ENCODE measurements at regions of chr5 and their contacts with region 1.

Region 1: GRCh38 chr5:40736103-40736875 is 19.5 kb downstream of the TTC33 start:
- DNase-seq: peak in 1 of 2 experiments; percentile 56
- H3K4me3 ChIP-seq: no peak overlapping the region
- H3K27ac ChIP-seq: no peak overlapping the region
- H3K4me1 ChIP-seq: 0 out of 2 replicates have a peak, but pooled peaks cover 8% of the 10 kb centered on the region
- H3K27me3 ChIP-seq: no peaks in the 10 kb centered on the region
- CTCF ChIP-seq: peak; percentile 91

Region 2: DNA sequence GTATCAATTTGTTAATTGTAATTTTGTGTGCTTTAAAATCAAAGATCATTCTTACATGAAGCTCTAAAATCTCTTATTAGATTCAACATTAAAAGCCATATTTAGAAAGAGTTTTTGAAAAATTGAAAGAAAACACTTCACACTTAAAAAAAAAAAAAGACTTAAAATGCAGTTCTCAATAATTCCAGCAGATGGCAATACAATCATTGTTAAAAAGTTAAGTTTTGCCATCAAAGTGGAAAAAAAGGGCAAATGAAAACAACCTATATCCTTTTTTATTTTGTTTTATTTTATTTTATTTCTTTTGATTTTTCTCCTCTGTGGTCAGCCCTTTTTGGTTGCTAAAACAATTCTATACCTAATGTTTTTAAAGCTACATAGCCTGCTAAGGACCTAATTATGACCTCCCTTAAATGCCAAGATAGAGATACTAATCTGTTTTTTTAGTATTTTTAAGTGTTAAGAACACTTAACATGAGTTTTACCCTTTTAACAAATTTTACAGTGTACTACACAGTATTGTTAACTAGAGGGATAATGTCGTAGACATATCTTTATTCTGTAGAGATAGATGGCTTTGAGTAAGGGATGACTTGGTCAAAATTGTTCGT is 1157.3 kb before region 1 on chr5:
- CTCF ChIA-PET with region 1: no interaction called
- POLR2A ChIA-PET with region 1: no interaction called
- intact Hi-C with region 1: loop called (anchors 1 kb)
- DNase-seq: no peak
- H3K4me3 ChIP-seq: no peak overlapping the region
- H3K27ac ChIP-seq: no peak overlapping the region
- H3K4me1 ChIP-seq: no peaks in the 10 kb centered on the region
- H3K27me3 ChIP-seq: no peaks in the 10 kb centered on the region
- CTCF ChIP-seq: peak; percentile 92

Region 3: DNA sequence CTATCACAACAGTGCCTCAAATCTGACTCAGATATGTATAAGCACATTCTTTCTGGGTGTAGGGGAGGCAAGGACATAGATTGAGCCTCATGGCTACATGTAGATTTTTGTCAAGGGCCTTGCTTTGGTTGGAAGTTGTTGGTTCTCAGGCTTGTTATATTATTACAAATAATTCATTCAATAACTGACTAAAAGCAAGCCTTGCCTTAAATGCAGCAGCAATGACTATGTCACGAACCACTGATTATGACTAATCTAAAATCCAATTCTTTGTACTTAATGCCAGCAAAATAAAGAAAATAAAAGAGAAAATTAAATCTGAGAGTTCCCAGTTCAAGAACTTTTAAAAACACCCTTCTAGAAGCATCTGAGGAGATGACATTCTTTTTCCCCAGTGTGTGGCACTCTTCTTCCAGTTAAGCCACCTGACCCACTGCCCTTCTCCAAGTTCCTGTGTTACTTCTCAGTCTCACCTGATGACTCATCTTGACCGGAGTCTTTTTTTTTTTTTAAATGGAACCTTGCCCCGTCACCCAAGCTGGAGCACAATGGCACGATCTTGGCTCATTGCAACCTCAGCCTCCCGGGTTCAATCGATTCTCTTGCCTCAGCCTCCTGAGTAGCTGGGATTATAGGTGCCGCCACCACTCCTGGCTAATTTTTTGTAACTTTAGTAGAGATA is 1087.6 kb before region 1 on chr5:
- CTCF ChIA-PET with region 1: no interaction called
- POLR2A ChIA-PET with region 1: no interaction called
- intact Hi-C with region 1: loop called (anchors 5 kb)
- DNase-seq: peak; percentile 61 to 66
- H3K4me3 ChIP-seq: no peak overlapping the region
- H3K27ac ChIP-seq: no peak overlapping the region
- H3K4me1 ChIP-seq: 0 out of 2 replicates have a peak, but pooled peaks cover 4% of the 10 kb centered on the region
- H3K27me3 ChIP-seq: no peaks in the 10 kb centered on the region
- CTCF ChIP-seq: no peak

Region 4: DNA sequence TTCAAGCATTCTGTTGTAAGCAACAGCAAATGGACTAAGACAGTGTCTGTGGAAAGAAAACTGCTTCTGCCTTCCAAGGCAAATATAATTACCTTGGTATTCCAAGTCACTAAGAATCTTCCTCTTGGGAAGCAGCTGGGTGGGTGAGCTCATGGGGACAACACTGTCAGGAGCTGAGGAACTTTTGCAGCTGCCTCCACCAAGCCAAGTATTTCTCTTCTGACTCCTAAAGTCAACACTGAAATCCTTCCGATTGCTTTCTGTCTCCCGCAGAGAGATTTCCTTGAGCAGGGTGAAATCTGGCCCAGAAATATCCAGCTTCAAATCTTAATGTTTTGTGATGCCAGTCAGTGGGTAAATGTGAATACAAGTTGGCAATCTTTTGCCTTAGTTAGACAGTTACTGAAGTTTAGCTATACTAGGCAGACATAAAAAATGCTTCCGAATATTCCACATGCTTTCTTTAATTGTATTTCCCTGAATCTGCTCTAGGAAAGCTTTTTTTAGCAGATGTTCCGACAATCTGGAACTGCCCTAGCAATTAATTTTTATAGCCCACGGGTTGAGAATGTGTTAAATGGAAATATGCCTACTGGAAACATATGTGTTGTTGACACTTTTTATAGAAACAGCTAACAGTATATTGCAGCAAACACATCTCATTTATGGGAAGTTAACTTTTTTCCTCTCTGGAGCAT is 941.6 kb before region 1 on chr5:
- CTCF ChIA-PET with region 1: no interaction called
- POLR2A ChIA-PET with region 1: interaction called, 17 read pairs
- intact Hi-C with region 1: no loop called
- DNase-seq: no peak
- H3K4me3 ChIP-seq: no peak overlapping the region
- H3K27ac ChIP-seq: no peak overlapping the region
- H3K4me1 ChIP-seq: no peaks in the 10 kb centered on the region
- H3K27me3 ChIP-seq: no peaks in the 10 kb centered on the region
- CTCF ChIP-seq: no peak

Region 5: GRCh38 chr5:40165794-40166728 is 570.2 kb before region 1 on chr5:
- CTCF ChIA-PET with region 1: no interaction called
- POLR2A ChIA-PET with region 1: no interaction called
- intact Hi-C with region 1: loop called (anchors 5 kb)
- DNase-seq: no peak
- H3K4me3 ChIP-seq: no peak overlapping the region
- H3K27ac ChIP-seq: no peak overlapping the region
- H3K4me1 ChIP-seq: no peaks in the 10 kb centered on the region
- H3K27me3 ChIP-seq: no peaks in the 10 kb centered on the region
- CTCF ChIP-seq: 0 out of 2 replicates have a peak, but pooled peaks have one; percentile 30

Region 6: GRCh38 chr5:40518511-40518967 is 217.8 kb before region 1 on chr5:
- CTCF ChIA-PET with region 1: no interaction called
- POLR2A ChIA-PET with region 1: no interaction called
- intact Hi-C with region 1: loop called (anchors 5 kb)
- DNase-seq: peak; percentile 96 to 98
- H3K4me3 ChIP-seq: no peak overlapping the region
- H3K27ac ChIP-seq: peak overlapping the region; percentile 84
- H3K4me1 ChIP-seq: peaks cover 33% of the 10 kb centered on the region
- H3K27me3 ChIP-seq: no peaks in the 10 kb centered on the region
- CTCF ChIP-seq: no peak

Region 7: GRCh38 chr5:40616781-40617180 is 119.5 kb before region 1 on chr5:
- CTCF ChIA-PET with region 1: no interaction called
- POLR2A ChIA-PET with region 1: no interaction called
- intact Hi-C with region 1: no loop called
- DNase-seq: no peak
- H3K4me3 ChIP-seq: no peak overlapping the region
- H3K27ac ChIP-seq: no peak overlapping the region
- H3K4me1 ChIP-seq: peaks cover 8% of the 10 kb centered on the region; the same call in 1 of the 2 replicates
- H3K27me3 ChIP-seq: no peaks in the 10 kb centered on the region
- CTCF ChIP-seq: no peak

Region 8: GRCh38 chr5:40688127-40688761 is 48.0 kb before region 1 on chr5:
- CTCF ChIA-PET with region 1: interaction called, 5 read pairs
- POLR2A ChIA-PET with region 1: no interaction called
- intact Hi-C with region 1: loop called (anchors 1 kb)
- DNase-seq: peak; percentile 80 to 93
- H3K4me3 ChIP-seq: no peak overlapping the region
- H3K27ac ChIP-seq: 0 out of 2 replicates have a peak overlapping the region, but pooled peaks have one; percentile 2
- H3K4me1 ChIP-seq: peaks cover 52% of the 10 kb centered on the region
- H3K27me3 ChIP-seq: no peaks in the 10 kb centered on the region
- CTCF ChIP-seq: peak; percentile 98